GM10248 (cell line): ENCODE measurements at regions of chr10 and their contacts with region 1.

Region 1: DNA sequence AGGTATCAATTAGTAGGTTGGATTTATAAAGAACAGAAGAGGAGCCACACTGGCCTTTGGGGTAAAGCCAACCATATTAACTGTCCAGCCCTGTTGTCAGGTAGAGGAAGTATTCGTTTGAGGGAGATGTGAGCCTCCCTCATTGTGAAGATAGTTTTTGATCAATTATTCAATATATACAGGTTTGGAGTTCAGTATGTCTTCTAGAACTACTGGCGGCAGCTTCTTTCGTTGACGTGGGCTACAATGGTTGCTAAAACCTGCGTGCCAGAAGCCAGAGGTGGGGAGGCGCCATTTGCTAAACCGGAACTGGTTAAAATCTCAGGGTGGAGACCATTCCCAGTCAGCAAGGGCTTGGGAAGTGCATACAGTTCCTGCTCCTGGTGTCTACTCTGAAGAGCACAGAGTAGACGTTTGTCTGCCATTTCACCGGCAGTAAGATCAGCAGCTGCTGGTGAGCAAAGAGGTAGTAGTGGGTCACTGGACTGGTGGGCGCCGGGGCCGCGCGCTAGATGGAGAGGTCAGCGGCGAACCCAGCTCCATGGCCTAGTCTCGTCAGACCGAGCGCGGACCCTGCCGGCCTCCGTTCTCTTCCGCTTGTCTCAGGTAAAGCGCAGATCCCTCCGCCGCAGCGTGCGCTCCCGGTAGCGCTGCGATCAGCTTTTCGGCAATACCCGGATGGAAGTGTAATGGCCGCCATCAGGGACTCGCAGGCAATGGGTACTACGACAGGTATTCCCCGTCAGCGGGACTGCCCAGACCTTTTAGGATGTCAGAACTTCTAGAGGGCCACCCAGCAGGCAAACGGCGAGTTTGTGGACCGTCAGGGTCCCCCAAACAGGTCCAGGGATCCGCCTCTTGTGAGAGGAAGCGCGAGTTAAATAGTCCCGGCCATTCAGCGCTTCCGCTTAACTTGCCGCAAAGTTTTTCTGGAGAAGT is at the start of gene ZNF518A:
- DNase-seq: peak; percentile 87
- CTCF ChIP-seq: no peak

Region 2: DNA sequence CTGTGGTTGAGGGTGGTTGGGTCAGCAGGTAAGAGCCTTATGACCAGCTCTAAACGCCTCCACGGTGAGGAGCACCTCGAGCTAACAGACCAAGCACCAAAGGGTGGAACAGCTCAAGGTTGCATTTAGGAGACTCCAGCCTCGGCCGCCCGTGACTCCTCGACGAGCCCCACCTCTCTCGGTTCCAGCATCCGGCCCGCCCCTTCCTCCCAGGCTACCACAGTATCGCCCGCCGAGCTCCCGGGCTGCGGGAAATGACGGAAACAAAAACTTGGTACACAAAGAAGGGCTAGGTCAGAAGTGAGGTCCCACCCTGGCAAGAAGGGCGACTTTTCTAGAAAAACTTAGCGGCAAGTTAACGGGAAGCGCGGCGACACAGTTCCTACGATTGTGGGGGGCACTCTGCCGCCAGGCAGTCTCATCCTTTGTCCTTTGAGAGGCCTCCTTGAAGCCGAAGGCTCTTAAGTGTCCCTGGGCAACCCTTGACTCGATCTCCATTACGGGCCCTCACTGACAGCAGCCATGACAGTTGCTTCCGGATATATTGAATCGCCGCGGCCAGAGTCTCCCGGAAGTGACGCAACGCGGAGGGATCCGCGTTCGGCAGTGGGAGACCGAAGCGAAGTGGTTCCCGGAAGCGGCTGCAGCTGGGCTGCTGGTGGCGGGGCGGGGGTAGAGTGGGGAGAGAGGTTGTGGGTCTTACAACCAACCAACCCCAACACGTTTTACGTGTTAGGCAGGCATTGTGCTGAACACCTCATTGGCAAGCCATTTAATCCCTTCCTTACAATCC is 39.8 kb before region 1 on chr10:
- CTCF ChIA-PET with region 1: interaction called, 4 read pairs
- POLR2A ChIA-PET with region 1: interaction called, 13 read pairs
- DNase-seq: peak; percentile 91
- CTCF ChIP-seq: no peak

Region 3: DNA sequence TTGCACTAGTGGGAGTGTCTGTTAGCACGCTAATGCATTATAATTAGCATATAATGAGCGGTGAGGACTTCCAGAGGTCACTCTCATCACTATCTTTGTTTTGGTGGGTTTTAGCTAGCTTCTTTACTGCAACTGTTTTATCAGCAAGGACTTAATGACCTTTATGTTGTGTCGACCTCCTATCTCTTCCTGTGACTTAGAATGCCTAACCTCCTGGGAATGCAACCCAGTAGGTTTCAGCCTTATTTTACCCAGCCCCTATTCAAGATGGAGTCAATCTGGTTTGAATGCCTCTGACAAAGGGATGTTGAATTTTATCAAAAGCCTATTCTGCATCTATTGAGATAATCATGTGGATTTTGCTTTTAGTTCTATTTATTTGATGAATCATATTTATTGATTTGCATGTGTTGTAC is 22.0 kb before region 1 on chr10:
- CTCF ChIA-PET with region 1: no interaction called
- POLR2A ChIA-PET with region 1: no interaction called
- DNase-seq: no peak
- CTCF ChIP-seq: no peak